Right ventricle myocardium inferior (tissue), 1 donor: ENCODE measurements at regions of chr7 and their contacts with region 1.

Region 1: GRCh38 chr7:50671386-50671785 is 106.2 kb upstream of the DDC start:
- DNase-seq: no peak
- ATAC-seq: no peak

Region 2: GRCh38 chr7:50502001-50502684 is 169.2 kb before region 1 on chr7:
- intact Hi-C with region 1: loop called (anchors 2 kb)
- DNase-seq: peak; percentile 86
- ATAC-seq: peak; percentile 93

Region 3: GRCh38 chr7:50937727-50938126 is 266.3 kb after region 1 on chr7:
- intact Hi-C with region 1: no loop called
- DNase-seq: no peak
- ATAC-seq: no peak